Uterus (tissue), 4 donors: ENCODE measurements at regions of chr1 and their contacts with region 1.

Region 1: DNA sequence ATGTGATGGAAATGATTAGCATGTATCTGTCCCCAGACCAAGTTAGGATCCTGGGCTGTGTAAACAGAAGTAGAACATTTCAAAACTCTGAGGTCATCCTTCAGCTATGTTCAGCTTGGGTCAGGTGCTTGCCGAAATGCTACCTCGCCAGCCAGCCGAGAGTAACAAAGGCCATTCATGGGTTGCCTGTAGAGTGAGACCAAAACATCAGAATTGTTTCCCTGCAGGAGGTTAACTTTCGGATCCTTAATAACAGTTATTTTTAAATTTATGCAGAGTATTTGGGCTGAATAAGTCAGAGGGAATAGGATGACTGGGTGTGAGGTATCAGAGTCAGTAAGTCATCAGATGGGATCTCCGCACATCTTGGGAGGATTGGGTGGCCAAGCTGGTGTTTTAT is 35.6 kb downstream of the SMYD2 start:
- DNase-seq: no peak
- H3K4me3 ChIP-seq: no peak overlapping the region
- H3K27ac ChIP-seq: no peak overlapping the region
- H3K4me1 ChIP-seq: no peaks in the 10 kb centered on the region
- H3K27me3 ChIP-seq: no peaks in the 10 kb centered on the region
- CTCF ChIP-seq: no peak
- POLR2A ChIP-seq: no peak

Region 2: GRCh38 chr1:214261206-214262123 is 55.1 kb before region 1 on chr1:
- intact Hi-C with region 1: loop called (anchors 5 kb)
- DNase-seq: peak; percentile 74 to 81
- H3K4me3 ChIP-seq: no peak overlapping the region
- H3K27ac ChIP-seq: no peak overlapping the region
- H3K4me1 ChIP-seq: no peaks in the 10 kb centered on the region
- H3K27me3 ChIP-seq: peaks cover 0 to 17% of the 10 kb centered on the region in 2 donors
- CTCF ChIP-seq: peak; percentile 79 to 95 (median 87)
- POLR2A ChIP-seq: no peak